GM13976 (cell line): ENCODE measurements at regions of chr1 and their contacts with region 1.

Region 1: DNA sequence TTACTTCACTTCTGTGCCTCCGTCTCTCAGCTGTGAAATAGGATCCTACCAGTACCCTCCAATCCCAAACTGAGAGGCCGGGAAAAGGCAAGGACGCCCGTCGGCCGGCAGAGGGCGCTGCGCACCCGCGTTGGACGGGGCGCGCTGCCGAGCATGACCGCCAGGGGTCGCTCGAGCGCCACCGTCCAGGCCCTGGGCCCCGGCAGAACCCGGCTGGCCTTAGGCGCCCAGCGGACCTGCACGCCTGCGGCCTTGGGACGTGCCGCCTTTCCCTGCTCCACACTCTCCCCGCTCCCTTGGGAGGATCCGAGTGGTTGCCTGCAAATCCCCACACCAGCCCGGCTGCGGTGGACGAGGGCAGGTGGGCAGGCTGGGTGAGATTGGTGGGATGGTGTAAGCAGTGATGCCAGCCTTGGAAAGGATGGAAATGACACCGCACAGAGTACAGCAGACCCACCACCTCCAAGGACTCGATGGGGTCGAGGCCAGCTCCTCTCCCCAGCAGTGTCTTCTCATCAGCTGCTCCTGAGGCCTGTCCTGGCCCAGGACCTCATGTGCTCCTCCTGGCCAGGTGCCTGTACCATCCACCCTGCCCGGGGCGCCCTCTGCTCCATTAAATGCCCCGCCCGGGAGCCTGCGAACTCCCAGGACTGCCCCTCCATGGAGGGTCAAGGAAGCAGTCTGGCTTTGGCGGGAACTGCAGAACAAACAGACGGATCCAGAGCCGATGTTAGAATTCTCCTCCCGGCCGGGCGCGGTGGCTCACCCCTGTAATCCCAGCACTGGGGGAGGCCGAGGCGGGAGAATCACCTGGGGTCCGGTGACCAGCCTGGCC is 47.4 kb upstream of the LBR start:
- DNase-seq: peak; percentile 90
- CTCF ChIP-seq: peak; percentile 100

Region 2: GRCh38 chr1:225627304-225627947 is 152.2 kb after region 1 on chr1:
- in situ Hi-C with region 1: no loop called
- DNase-seq: no peak
- CTCF ChIP-seq: no peak

Region 3: GRCh38 chr1:225777583-225778336 is 302.6 kb after region 1 on chr1 and contains the start of gene SRP9:
- in situ Hi-C with region 1: loop called (anchors 10 kb)
- DNase-seq: peak; percentile 97
- CTCF ChIP-seq: peak; percentile 93

Region 4: DNA sequence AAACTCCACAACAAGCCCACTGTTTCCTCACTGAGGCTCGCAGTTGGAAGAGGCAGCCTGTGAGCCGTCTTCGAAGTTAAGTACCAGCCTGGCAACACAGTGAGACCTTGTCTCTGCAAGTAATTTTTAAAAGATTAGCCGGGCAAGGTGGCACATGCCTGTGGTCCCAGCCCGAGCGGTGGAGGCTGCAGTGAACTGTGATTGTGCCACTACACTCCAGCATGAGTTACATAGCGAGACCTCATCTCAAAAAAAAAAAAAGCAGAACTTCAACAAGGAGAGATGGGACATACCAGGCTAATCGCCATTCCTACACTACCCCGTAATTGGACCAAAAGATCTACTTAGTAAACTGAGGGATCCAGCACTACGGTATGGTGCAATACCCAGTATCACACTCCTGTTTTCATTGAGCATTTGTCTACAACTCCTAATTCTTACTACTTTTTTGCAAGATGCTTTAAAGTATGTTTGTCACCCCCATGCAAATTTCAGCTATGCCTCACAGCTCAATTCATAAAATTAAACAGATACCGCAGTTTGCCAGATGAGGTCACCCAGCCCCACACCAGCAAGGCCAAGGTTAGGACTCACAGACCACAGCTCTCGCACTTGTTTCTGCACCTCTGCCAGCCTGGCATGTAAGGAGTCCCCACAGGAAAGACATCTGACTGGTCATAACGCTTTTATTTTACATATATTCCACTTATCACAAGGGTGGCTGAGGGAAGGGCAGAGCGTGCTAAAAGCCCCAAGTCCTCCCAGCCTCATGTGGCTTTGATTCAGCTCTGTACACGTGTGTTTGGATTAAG is 502.9 kb after region 1 on chr1:
- in situ Hi-C with region 1: loop called (anchors 5 kb)
- DNase-seq: peak; percentile 60
- CTCF ChIP-seq: peak; percentile 34